Ovary (tissue), 10 donors: ENCODE measurements at regions of chrX and their contacts with region 1.

Region 1: DNA sequence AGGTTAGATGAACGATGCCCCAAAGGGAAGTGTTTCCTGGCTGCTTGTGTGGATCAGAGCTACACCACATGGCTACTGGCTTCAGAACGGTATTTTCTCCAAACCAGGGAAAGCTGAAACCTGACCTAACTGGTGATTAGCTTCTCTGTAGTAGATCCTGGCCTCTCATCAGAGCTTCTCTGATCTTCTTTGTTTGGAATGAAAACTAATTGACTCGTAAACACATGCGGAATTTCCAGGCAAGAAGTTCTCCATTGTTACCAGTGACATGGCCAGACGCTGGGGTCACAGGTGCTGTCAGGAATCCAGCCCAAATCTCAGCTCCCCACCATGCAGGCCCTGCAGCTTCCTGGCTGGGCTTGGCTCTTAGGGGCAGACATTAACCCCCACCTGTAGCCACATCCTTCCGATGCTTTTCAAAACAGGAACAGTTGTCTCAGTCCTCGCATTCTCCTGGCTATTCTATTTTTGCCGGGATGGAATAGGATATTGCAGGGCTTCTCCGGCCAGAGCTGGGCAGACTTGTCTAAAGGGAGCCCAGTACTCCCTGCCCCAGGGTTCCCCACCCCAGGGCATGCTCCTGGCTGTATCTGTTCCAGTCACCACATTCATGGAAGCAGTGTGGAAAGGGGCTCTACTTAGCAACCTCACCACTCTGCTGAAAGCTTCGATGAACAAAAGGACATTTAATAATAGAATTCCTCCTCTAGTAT is 305.4 kb upstream of the F9 start:
- DNase-seq: no peak
- H3K4me3 ChIP-seq: no peak overlapping the region
- H3K27ac ChIP-seq: no peak overlapping the region
- H3K4me1 ChIP-seq: no peaks in the 10 kb centered on the region
- H3K27me3 ChIP-seq: no peaks in the 10 kb centered on the region
- CTCF ChIP-seq: no peak
- EP300 ChIP-seq: no peak
- POLR2A ChIP-seq: no peak

Region 2: DNA sequence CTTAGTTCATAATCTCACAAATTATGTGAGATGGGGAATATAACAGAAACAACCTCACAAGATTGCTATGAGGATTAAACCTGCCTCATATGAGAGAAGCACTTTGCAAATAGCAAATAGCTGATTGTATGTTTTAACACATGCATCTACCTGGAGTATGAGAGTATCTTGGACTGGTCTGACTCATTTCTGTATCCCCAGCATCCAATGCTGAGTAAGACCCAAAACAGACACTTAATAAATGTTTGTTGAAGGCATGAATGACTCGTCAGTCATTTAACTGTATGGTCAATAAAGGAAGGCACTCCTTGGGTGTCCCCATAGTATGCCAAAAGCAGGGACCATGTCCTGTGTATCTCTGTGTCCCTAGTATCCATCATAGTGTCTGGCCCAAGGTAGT is 45.5 kb before region 1 on chrX:
- intact Hi-C with region 1: loop called in 1 of 4 experiments (anchors 1 kb)
- DNase-seq: no peak
- H3K4me3 ChIP-seq: no peak overlapping the region
- H3K27ac ChIP-seq: no peak overlapping the region
- H3K4me1 ChIP-seq: no peaks in the 10 kb centered on the region
- H3K27me3 ChIP-seq: no peaks in the 10 kb centered on the region
- CTCF ChIP-seq: no peak
- EP300 ChIP-seq: no peak
- POLR2A ChIP-seq: no peak

Region 3: GRCh38 chrX:141142946-141143345 is 1917.8 kb after region 1 on chrX:
- intact Hi-C with region 1: no loop called
- DNase-seq: no peak
- H3K4me3 ChIP-seq: no peak overlapping the region
- H3K27ac ChIP-seq: no peak overlapping the region
- H3K4me1 ChIP-seq: no peaks in the 10 kb centered on the region
- H3K27me3 ChIP-seq: no peaks in the 10 kb centered on the region
- CTCF ChIP-seq: no peak
- EP300 ChIP-seq: no peak
- POLR2A ChIP-seq: no peak